Right cardiac atrium (tissue), 5 donors: ENCODE measurements at regions of chr1 and their contacts with region 1.

Region 1: DNA sequence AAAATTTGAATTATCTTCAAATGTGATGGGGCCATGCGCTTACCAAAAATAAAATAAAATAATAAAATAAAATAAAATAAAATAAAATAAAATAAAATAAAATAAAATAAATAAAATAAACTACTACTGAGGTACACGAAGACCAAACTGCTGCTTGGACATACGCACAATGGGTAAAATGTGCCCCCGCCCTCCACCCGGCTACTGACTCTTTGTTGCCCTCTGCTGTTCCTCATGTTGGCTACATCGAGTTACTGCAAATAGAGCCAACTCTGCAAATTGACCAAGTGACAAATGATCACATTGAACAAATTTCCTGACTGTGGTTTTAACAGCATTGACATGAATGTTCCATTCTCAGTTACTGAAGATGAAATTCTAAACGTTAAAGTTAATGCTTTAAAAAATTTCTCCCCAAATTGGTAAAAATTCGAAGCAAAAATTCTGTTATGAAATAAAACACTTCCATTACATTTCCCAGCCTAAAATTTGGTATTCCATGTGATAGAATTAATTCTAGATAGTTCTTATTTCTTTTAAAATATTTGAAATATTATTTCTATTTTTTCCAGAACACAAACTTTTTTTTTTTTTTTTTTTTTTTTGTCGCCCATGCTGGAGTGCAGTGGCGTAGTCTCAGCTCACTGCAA is 18.8 kb upstream of the MAP1LC3C start:
- DNase-seq: peak in 2 of 3 donors; percentile 22 to 61
- ATAC-seq: peak in 1 of 2 donors; percentile 64
- H3K4me3 ChIP-seq: no peak overlapping the region
- H3K27ac ChIP-seq: no peak overlapping the region
- H3K4me1 ChIP-seq: no peaks in the 10 kb centered on the region
- H3K27me3 ChIP-seq: no peaks in the 10 kb centered on the region

Region 2: GRCh38 chr1:241860922-241861321 is 156.8 kb before region 1 on chr1:
- intact Hi-C with region 1: no loop called
- DNase-seq: no peak
- ATAC-seq: no peak
- H3K4me3 ChIP-seq: no peak overlapping the region
- H3K27ac ChIP-seq: no peak overlapping the region
- H3K4me1 ChIP-seq: no peaks in the 10 kb centered on the region
- H3K27me3 ChIP-seq: no peaks in the 10 kb centered on the region

Region 3: GRCh38 chr1:241895013-241895412 is 122.7 kb before region 1 on chr1:
- intact Hi-C with region 1: loop called in 1 of 4 experiments (anchors 10 kb)
- DNase-seq: no peak
- ATAC-seq: no peak
- H3K4me3 ChIP-seq: no peak overlapping the region
- H3K27ac ChIP-seq: no peak overlapping the region
- H3K4me1 ChIP-seq: no peaks in the 10 kb centered on the region
- H3K27me3 ChIP-seq: no peaks in the 10 kb centered on the region